H1 (cell line): ENCODE measurements at regions of chr6 and their contacts with region 1.

Region 1: GRCh38 chr6:33860706-33861474 is 57.1 kb upstream of the MLN start:
- DNase-seq: no peak
- H3K4me3 ChIP-seq: no peak overlapping the region
- H3K27ac ChIP-seq: no peak overlapping the region
- H3K4me1 ChIP-seq: no peaks in the 10 kb centered on the region; a peak in 1 of 7 replicates
- H3K27me3 ChIP-seq: 0 out of 7 replicates have a peak, but pooled peaks cover 0 to 1% (median 0%) of the 10 kb centered on the region in 4 experiments
- CTCF ChIP-seq: no peak
- EP300 ChIP-seq: no peak
- POLR2A ChIP-seq: no peak
- RAD21 ChIP-seq: no peak

Region 2: GRCh38 chr6:33875141-33875581 is 14.3 kb after region 1 on chr6:
- CTCF ChIA-PET with region 1: interaction called, 10 read pairs
- POLR2A ChIA-PET with region 1: no interaction called
- DNase-seq: no peak
- H3K4me3 ChIP-seq: no peak overlapping the region
- H3K27ac ChIP-seq: no peak overlapping the region
- H3K4me1 ChIP-seq: peaks cover 0 to 11% (median 3%) of the 10 kb centered on the region in 4 experiments; a peak in 4 of 7 replicates
- H3K27me3 ChIP-seq: no peaks in the 10 kb centered on the region
- CTCF ChIP-seq: no peak
- EP300 ChIP-seq: no peak
- POLR2A ChIP-seq: no peak
- RAD21 ChIP-seq: no peak